Mammary epithelial cell (primary cell): ENCODE measurements at regions of chr10 and their contacts with region 1.

Region 1: DNA sequence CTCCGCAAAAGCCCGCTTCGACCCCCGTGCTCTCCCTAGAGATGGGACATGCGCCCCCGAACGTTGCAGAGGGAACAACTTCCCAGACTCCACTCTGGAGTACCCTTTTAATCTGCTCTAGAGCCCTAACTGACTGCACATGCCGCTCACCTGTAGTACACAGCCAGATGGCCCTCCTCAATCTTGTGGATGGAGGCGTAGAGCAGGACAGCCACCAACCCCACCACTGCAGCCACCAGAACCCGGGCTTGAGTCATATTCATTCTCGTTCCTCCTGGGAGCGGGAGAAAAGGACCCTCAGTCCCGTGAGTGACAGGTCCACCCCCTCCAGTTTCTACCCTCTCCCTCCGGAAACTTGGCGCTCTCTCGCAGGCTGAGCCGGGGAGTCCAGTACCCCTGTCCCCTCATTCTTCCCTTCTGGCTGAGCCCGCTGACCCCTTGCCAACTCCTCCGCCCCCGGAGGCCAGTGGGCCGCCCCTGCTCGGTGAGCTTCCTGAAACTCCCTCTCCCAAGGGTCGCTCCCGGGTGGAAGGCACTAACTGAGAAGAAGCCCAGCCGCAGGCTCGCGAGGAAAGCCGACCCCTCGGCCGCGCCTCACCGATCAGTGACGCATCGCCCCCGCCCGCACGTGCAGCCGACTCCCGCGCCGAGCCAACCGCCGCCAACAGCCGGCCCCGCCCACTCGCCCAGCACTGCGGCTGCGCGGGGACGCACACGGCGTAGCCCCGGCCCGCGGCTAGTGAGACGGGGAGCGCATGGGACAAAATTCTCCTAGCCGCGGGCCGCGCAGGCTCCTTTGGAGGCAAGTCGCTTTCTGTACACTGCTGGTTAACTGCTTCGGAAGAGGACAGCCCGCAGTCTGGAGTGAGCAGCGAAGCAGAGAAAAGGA is at the start of gene ERLIN1:
- DNase-seq: peak; percentile 90
- H3K4me3 ChIP-seq: peak within 1 kb of the TSS; percentile 66 to 96 (median 85)
- H3K27ac ChIP-seq: peak within 1 kb of the TSS; percentile 95
- H3K4me1 ChIP-seq: peaks cover 24% of the 10 kb centered on the region
- H3K27me3 ChIP-seq: no peaks in the 10 kb centered on the region
- CTCF ChIP-seq: no peak
- total RNA-seq, gene ERLIN1: 31.5 to 44.3 TPM

Region 2: GRCh38 chr10:99906470-99906869 is 279.1 kb before region 1 on chr10:
- CTCF ChIA-PET with region 1: no interaction called
- dilution Hi-C with region 1: no loop called
- in situ Hi-C with region 1: loop called in 1 of 2 experiments (anchors 10 kb)
- intact Hi-C with region 1: no loop called
- DNase-seq: peak; percentile 96
- H3K4me3 ChIP-seq: no peak overlapping the region
- H3K27ac ChIP-seq: peak overlapping the region; percentile 79
- H3K4me1 ChIP-seq: peaks cover 28% of the 10 kb centered on the region
- H3K27me3 ChIP-seq: no peaks in the 10 kb centered on the region
- CTCF ChIP-seq: peak; percentile 55 to 66

Region 3: DNA sequence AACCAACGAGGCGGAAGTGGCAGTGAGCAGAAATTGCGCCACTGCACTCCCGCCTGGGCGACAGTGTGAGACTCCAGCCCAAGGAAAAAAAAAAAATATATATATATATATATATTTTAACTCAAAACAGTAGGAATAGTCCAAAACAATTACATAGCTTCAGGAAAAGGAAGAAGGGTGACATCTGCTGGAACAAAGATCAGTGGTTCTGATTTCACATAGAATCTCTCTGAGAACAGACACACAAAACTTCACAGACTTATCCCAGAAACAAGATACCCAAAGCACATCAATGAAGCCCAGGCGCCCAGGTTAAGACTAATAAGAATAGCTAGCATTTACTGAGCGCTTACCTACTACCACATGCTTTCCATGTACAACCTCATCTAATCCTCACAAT is 220.8 kb before region 1 on chr10:
- CTCF ChIA-PET with region 1: no interaction called
- dilution Hi-C with region 1: no loop called
- in situ Hi-C with region 1: no loop called
- intact Hi-C with region 1: no loop called
- DNase-seq: no peak
- H3K4me3 ChIP-seq: no peak overlapping the region
- H3K27ac ChIP-seq: peak overlapping the region; percentile 29
- H3K4me1 ChIP-seq: peaks cover 43% of the 10 kb centered on the region
- H3K27me3 ChIP-seq: no peaks in the 10 kb centered on the region
- CTCF ChIP-seq: peak in 1 of 2 donors; percentile 16

Region 4: GRCh38 chr10:99976886-99977665 is 208.5 kb before region 1 on chr10:
- CTCF ChIA-PET with region 1: no interaction called
- dilution Hi-C with region 1: no loop called
- in situ Hi-C with region 1: no loop called
- intact Hi-C with region 1: loop called (anchors 10 kb)
- DNase-seq: peak; percentile 96
- H3K4me3 ChIP-seq: peak overlapping the region in 1 of 3 experiments; percentile 25
- H3K27ac ChIP-seq: peak overlapping the region; percentile 95
- H3K4me1 ChIP-seq: peaks cover 32% of the 10 kb centered on the region
- H3K27me3 ChIP-seq: no peaks in the 10 kb centered on the region
- CTCF ChIP-seq: no peak

Region 5: GRCh38 chr10:100130831-100131230 is 54.8 kb before region 1 on chr10:
- CTCF ChIA-PET with region 1: no interaction called
- dilution Hi-C with region 1: no loop called
- in situ Hi-C with region 1: no loop called
- intact Hi-C with region 1: no loop called
- DNase-seq: no peak
- H3K4me3 ChIP-seq: no peak overlapping the region
- H3K27ac ChIP-seq: no peak overlapping the region
- H3K4me1 ChIP-seq: no peaks in the 10 kb centered on the region
- H3K27me3 ChIP-seq: no peaks in the 10 kb centered on the region
- CTCF ChIP-seq: no peak

Region 6: GRCh38 chr10:100148353-100149211 is 37.0 kb before region 1 on chr10:
- CTCF ChIA-PET with region 1: no interaction called
- dilution Hi-C with region 1: no loop called
- in situ Hi-C with region 1: no loop called
- intact Hi-C with region 1: loop called (anchors 1 kb)
- DNase-seq: peak; percentile 99
- H3K4me3 ChIP-seq: no peak overlapping the region
- H3K27ac ChIP-seq: peak overlapping the region; percentile 80
- H3K4me1 ChIP-seq: peaks cover 28% of the 10 kb centered on the region
- H3K27me3 ChIP-seq: no peaks in the 10 kb centered on the region
- CTCF ChIP-seq: no peak

Region 7: GRCh38 chr10:100245484-100246220 is 60.0 kb after region 1 on chr10:
- CTCF ChIA-PET with region 1: interaction called, 19 read pairs
- dilution Hi-C with region 1: no loop called
- in situ Hi-C with region 1: no loop called
- intact Hi-C with region 1: no loop called
- DNase-seq: no peak
- H3K4me3 ChIP-seq: no peak overlapping the region
- H3K27ac ChIP-seq: no peak overlapping the region
- H3K4me1 ChIP-seq: no peaks in the 10 kb centered on the region
- H3K27me3 ChIP-seq: no peaks in the 10 kb centered on the region
- CTCF ChIP-seq: no peak